AG04449 (cell line): ENCODE measurements at regions of chrX and their contacts with region 1.

Region 1: DNA sequence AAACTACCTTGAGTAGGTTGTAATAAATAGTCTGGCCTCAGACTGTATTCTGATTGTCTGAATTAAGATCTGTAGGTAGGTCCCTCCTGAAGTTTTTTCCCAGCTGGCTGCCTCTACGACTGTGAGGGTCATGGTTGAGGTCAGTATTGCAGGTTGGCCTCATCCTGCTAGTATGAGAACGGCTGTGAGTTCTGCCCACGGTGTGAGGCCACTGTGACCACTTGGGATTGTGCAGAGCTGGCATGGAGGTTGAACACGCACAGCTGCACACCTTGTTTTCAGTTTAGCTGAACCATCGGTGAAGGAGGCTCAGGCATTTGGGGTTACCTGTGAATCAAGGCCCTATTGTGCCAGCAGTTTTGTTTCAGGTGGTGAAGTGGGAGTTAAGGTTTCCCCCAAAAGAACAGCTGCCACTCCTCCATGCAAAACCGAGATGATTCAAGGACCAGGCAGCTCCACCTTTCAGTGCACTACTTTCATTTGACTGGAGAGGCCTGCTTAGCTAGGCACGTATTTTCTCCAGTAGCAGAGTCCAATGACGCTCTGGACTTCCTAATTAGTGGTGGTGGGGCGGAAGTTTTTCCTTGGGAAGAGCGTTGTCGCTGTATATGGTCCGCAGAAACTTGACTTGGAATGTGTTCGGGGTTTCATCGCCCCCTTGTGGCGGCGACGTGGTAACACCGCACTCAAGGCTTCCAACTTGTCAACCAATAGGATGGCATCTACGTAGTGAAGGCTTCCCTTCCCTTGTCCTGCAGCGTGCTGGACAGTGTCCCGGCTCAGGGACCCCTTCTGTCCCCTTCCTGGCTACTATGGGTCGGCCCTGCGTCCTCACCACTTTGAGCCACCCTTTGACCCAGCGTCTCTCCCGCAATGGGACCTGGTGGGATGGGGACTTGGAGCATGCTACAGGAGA is 13.8 kb downstream of the CMC4 start:
- DNase-seq: no peak
- H3K4me3 ChIP-seq: 0 out of 2 replicates have a peak overlapping the region, but pooled peaks have one; percentile 20
- CTCF ChIP-seq: peak; percentile 69

Region 2: DNA sequence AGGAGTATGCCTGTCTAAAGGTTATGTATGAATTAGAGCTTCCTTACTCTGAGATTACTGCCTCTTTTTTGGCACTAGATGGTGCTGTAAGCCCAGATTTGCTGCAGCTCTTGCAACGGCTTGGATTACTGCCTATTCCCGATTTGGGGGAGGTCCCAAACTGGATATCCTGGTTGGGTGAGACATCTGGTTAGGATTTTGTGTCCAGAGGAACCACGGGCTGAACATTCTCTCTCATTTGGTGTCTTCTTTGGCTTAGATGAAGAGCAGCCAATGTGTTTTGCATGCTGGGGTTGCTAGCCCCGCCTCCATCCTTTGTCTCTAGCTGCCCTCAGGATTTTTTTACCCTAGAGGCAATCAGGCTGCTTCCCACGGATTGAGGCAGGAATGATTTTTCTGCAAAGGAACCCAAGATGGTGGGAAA is 139.1 kb before region 1 on chrX:
- CTCF ChIA-PET with region 1: interaction called, 15 read pairs
- POLR2A ChIA-PET with region 1: no interaction called
- DNase-seq: peak; percentile 36
- H3K4me3 ChIP-seq: no peak overlapping the region; the same call in 1 of the 2 replicates
- CTCF ChIP-seq: peak; percentile 43

Region 3: DNA sequence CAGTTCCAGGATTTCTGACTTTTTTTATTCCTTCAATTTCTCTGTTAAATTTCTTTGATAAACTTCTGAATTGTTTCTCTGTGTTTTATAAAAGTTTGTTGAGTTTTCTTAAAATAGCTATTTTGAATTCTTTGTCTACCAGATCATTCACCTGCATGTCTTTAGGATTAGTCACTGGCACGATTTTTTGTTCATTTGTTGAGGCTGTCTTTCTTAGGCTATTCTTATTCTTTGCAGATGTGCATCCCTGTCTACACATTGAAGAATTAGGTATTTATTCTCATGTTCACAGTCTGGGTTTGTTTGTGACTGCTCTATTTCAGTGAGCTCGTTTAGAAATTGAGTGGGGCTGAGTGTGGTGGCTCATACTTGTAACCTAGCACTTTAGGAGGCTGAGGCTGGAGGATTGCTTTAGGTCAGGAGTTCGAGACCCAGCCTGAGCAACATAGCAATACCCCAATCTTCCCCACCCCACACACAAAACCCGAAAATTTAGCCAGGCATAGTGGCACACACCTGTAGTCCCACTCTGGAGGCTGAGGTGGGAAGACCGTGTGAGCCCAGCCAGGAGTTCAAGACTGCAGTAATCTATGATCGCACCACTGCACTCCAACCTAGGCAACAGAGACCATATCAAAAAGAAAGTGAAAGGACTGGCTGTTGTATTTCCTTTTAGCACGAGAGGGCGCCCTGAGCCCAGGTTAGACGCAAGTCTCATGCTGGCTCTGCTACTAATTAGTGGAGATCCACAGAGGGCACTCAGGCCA is 76.6 kb before region 1 on chrX:
- CTCF ChIA-PET with region 1: interaction called, 15 read pairs
- POLR2A ChIA-PET with region 1: no interaction called
- DNase-seq: no peak
- H3K4me3 ChIP-seq: peak overlapping the region; percentile 55
- CTCF ChIP-seq: peak; percentile 53

Region 4: GRCh38 chrX:155046129-155046810 is 10.9 kb before region 1 on chrX:
- CTCF ChIA-PET with region 1: interaction called, 17 read pairs
- POLR2A ChIA-PET with region 1: no interaction called
- DNase-seq: no peak
- H3K4me3 ChIP-seq: no peak overlapping the region
- CTCF ChIP-seq: no peak

Region 5: GRCh38 chrX:155070975-155071693 is 14.0 kb after region 1 on chrX and contains the starts of genes BRCC3, CMC4 and MTCP1:
- CTCF ChIA-PET with region 1: interaction called, 47 read pairs
- POLR2A ChIA-PET with region 1: no interaction called
- DNase-seq: no peak
- H3K4me3 ChIP-seq: peak within 1 kb of the TSS; percentile 71
- CTCF ChIP-seq: no peak

Region 6: GRCh38 chrX:155293771-155294170 is 236.6 kb after region 1 on chrX:
- CTCF ChIA-PET with region 1: no interaction called
- POLR2A ChIA-PET with region 1: no interaction called
- DNase-seq: no peak
- H3K4me3 ChIP-seq: no peak overlapping the region
- CTCF ChIP-seq: no peak